ENCODE measurements at regions of chrX and their contacts with region 1.

Region 1: GRCh38 chrX:129540068-129540653 is at the start of gene OCRL:
- DNase-seq: peak; percentile 10 to 49 (median 40)
- ATAC-seq: peak; percentile 82
- H3K4me3 ChIP-seq: peak within 1 kb of the TSS; percentile 47
- H3K4me3 Mint-ChIP-seq: peak within 1 kb of the TSS; percentile 66 to 87 (median 82)
- H3K27ac ChIP-seq: peak within 1 kb of the TSS; percentile 55
- H3K27ac Mint-ChIP-seq: peak within 1 kb of the TSS in 8 of 9 donors; percentile 4 to 81 (median 16)
- H3K4me1 ChIP-seq: no peaks in the 10 kb centered on the region
- H3K4me1 Mint-ChIP-seq: peaks cover 6 to 22% (median 16%) of the 10 kb centered on the region in 7 donors
- H3K27me3 ChIP-seq: no peaks in the 10 kb centered on the region
- H3K27me3 Mint-ChIP-seq: peaks cover 0 to 10% (median 0%) of the 10 kb centered on the region in 5 donors
- total RNA-seq, gene OCRL: 2.7 to 6.2 (median 5.6) TPM

Region 2: DNA sequence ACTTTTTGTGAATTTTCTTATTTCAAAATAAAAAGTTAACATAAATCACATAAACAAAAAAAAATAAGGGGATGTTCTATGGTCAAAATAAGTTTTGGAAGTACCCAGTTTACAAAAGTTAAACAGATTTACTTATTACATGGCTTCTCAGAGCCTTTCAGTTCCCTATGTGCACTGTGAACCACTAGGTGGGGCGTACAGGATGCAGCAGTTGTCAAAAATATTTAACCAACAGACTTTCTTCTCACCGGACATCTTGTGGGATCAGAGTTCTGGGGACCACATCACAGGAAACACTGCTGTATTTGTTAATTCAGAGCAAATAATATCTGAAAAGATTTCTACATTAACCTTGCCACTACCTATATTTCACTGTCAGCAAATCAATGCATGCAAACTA is 91.0 kb before region 1 on chrX:
- CTCF ChIA-PET with region 1: no interaction called
- POLR2A ChIA-PET with region 1: no interaction called
- intact Hi-C with region 1: loop called in 1 of 2 experiments (anchors 2 kb)
- DNase-seq: no peak
- ATAC-seq: no peak
- H3K4me3 ChIP-seq: no peak overlapping the region
- H3K4me3 Mint-ChIP-seq: no peak overlapping the region
- H3K27ac ChIP-seq: no peak overlapping the region
- H3K27ac Mint-ChIP-seq: no peak overlapping the region
- H3K4me1 ChIP-seq: no peaks in the 10 kb centered on the region
- H3K4me1 Mint-ChIP-seq: no peaks in the 10 kb centered on the region
- H3K27me3 ChIP-seq: no peaks in the 10 kb centered on the region
- H3K27me3 Mint-ChIP-seq: no peaks in the 10 kb centered on the region

Region 3: DNA sequence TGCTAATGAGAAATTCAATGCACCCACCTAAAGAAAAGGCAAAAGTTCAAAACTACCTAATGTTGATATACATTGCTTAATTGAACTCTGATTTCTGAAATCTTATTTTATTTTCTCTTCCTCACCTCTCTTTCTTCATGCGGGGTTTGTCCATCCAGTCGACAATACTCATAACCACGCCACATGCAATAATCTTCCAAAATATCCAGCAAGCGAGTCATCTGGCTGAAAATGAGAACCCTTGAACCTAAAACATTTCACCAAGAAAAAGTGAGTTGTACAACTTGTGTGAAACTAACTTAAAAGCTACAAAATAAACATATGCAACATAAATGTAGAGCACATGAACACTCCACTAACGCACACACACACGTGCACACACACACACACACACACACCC is 43.5 kb before region 1 on chrX:
- CTCF ChIA-PET with region 1: no interaction called
- POLR2A ChIA-PET with region 1: no interaction called
- intact Hi-C with region 1: loop called in 1 of 2 experiments (anchors 5 kb)
- DNase-seq: no peak
- ATAC-seq: no peak
- H3K4me3 ChIP-seq: no peak overlapping the region
- H3K4me3 Mint-ChIP-seq: no peak overlapping the region
- H3K27ac ChIP-seq: no peak overlapping the region
- H3K27ac Mint-ChIP-seq: no peak overlapping the region
- H3K4me1 ChIP-seq: no peaks in the 10 kb centered on the region
- H3K4me1 Mint-ChIP-seq: no peaks in the 10 kb centered on the region
- H3K27me3 ChIP-seq: no peaks in the 10 kb centered on the region
- H3K27me3 Mint-ChIP-seq: no peaks in the 10 kb centered on the region

Region 4: DNA sequence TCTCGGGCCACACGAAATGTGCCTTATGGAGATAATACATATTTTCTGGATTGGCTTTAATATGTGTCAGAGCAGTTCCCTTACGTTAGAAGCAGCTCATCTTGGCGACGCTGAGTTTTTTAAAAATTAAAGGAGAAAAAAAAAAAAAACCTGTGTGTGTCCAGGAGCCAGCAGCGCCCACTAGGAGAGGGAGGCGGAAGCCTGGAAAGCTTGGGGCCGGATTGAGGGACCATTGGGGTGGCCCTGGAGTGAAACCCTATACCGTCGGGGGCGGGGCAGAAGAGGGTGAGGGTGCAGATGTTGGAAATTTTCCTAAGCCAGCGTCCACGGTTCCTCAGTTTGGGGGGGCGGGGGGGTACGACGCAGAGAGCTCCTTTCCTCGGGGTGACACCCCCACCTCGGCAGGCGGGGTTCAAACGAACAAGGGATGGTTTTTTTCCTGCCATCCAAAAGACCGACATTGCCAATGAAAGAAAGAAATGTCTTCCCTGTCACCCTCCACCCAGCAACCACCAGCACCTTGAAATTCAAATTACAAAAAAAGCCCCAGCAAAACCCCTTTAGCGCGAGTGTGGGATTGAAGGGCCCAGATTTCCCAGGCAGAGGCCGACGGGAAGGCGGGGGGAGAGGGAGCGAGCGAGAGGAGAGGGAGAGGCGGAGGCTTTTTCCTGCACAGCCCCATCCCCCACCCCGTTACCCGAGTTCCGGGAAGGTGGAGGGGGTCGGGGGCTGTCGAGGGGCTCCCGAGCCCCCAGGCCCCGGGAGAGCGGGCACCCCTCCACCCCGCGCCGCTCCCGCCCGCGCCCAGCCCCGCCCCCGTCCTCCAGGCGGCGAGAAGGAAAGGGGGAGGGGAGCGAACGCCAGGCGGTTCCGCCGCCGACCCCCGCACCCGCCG is 17.7 kb before region 1 on chrX:
- CTCF ChIA-PET with region 1: no interaction called
- POLR2A ChIA-PET with region 1: no interaction called
- intact Hi-C with region 1: loop called in 1 of 2 experiments (anchors 2 kb)
- DNase-seq: peak in 4 of 9 donors; percentile 8 to 18 (median 14)
- ATAC-seq: peak; percentile 12
- H3K4me3 ChIP-seq: peak overlapping the region; percentile 46
- H3K4me3 Mint-ChIP-seq: peak overlapping the region; percentile 74 to 92 (median 88)
- H3K27ac ChIP-seq: peak overlapping the region; percentile 62
- H3K27ac Mint-ChIP-seq: peak overlapping the region in 8 of 9 donors; percentile 2 to 83 (median 72)
- H3K4me1 ChIP-seq: peaks cover 0 to 7% of the 10 kb centered on the region in 2 donors
- H3K4me1 Mint-ChIP-seq: peaks cover 0 to 18% (median 11%) of the 10 kb centered on the region in 7 donors
- H3K27me3 ChIP-seq: peaks cover 0 to 2% of the 10 kb centered on the region in 2 donors
- H3K27me3 Mint-ChIP-seq: peaks cover 0 to 50% (median 0%) of the 10 kb centered on the region in 5 donors

Measured in naive thymus-derived CD4-positive, alpha-beta T cell (primary cell).